Right ventricle myocardium inferior (tissue), 1 donor: ENCODE measurements at regions of chr14 and their contacts with region 1.

Region 1: GRCh38 chr14:64636208-64636979 is 67.8 kb upstream of the PLEKHG3 start:
- DNase-seq: peak; percentile 82
- ATAC-seq: peak; percentile 88

Region 2: DNA sequence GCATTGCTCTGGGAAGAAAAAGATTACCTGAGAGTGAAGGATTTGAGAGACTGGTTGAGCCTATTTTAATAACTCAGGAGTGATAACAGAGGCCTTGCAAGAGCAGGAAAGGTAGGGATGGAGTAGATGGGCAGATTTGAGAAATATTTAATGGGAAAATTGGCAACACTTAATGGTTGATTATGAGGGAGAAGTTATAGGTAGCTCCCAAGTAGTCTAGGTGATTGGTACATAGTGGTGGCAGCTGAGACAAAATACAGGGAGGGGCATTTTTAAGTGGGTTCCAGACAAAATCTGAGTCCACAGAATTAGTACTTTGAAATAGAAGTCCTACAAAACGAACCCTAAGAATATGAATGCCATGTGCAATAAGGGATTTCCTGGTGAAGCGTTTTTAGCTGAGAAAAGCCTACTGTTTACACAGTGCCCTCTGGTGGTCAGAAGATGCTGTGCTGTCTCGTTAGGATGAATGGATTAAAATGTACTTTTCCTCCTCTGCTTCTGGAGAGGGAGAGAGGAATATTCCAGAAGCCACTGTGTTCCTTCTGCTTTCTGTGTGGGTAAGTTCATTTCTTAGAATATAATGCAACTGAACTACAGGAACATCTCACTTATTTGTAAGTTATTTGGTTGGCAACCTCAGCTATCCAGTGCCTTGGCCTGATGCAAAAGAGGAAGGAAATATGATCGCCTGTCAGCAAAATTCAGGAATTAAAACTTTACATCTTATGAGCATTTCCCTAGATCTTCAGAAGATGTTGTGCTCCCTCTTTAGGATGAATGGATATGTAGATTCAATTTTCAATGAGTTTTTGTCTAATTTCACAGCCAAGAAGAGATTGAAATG is 125.3 kb before region 1 on chr14:
- intact Hi-C with region 1: loop called (anchors 10 kb)
- DNase-seq: no peak
- ATAC-seq: peak; percentile 44

Region 3: GRCh38 chr14:64569184-64569631 is 67.2 kb before region 1 on chr14:
- intact Hi-C with region 1: no loop called
- DNase-seq: no peak
- ATAC-seq: peak; percentile 93

Region 4: GRCh38 chr14:64726585-64726890 is 90.1 kb after region 1 on chr14:
- intact Hi-C with region 1: no loop called
- DNase-seq: no peak
- ATAC-seq: no peak